ENCODE measurements at regions of chr18 and their contacts with region 1.

Region 1: DNA sequence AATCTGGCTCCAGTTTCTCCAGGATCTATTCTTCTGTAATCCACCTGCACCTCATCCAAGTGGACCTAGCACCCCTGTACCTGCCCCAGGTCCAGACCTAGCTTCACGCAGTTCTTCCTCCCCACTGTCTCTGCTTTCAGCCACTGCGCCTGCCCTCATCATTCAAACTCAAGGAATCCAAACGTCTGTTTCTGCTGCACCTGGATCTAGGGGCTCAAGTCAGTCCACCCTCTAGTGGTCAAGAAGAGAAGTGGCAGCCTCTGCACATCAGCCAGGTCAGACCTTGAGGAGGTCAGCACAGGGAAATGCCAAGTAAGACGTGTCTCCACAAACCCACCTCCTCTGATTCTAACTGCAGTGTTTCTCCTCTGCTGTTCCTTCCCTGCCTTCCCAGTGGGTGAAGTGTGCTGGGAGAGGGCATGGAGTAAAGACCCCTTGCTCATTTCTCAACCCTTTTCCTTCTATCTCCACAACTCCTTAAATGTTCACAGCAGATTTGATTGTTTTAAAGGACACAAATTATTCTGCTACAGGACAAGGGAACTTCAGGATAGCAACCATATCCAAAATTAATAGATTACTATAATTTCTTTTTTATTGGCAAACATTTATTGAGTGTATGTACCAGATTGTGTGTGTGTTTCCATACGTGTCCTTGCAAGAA is 8.6 kb upstream of the RNF152 start:
- DNase-seq: peak; percentile 73
- ATAC-seq: peak; percentile 94
- H3K4me3 ChIP-seq: no peak overlapping the region
- H3K27ac ChIP-seq: no peak overlapping the region
- H3K4me1 ChIP-seq: peaks cover 6% of the 10 kb centered on the region; the same call in 1 of the 2 replicates
- H3K27me3 ChIP-seq: peaks cover 17% of the 10 kb centered on the region
- CTCF ChIP-seq: peak; percentile 89

Region 2: GRCh38 chr18:61551586-61551985 is 349.9 kb before region 1 on chr18:
- CTCF ChIA-PET with region 1: no interaction called
- POLR2A ChIA-PET with region 1: no interaction called
- intact Hi-C with region 1: loop called (anchors 5 kb)
- DNase-seq: peak; percentile 82
- ATAC-seq: peak; percentile 74
- H3K4me3 ChIP-seq: no peak overlapping the region
- H3K27ac ChIP-seq: no peak overlapping the region
- H3K4me1 ChIP-seq: no peaks in the 10 kb centered on the region
- H3K27me3 ChIP-seq: no peaks in the 10 kb centered on the region
- CTCF ChIP-seq: peak; percentile 79

Region 3: DNA sequence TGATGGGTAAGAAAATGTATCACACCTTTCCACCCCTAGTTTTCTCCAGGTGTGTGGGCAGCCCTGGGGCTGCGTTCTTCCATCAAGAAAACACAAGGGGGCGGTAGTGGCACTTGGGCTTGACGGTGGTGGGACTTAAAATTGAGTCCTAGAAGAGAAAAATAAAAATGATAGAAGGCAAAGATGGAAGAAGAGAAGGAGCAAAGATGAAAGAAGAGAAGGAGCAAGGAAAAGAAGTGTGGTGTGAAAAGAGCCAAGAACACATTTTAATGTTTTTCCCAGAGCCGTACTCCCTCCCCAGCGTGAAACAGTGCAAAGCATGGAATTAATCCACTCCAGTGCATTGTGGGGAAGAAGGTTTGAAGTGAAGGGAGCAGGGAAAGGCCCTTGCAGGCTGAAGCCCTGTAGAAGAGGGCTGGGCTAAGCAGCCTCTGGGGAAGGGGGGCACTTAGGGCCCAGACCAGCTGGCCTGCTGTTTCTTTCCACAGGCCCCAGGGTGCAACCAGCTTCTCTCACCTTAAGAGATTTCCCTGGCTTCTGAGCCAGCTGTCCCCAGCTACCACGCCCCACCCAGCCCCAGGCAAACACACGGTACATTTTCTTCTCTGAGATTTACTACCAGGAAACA is 265.4 kb before region 1 on chr18:
- CTCF ChIA-PET with region 1: no interaction called
- POLR2A ChIA-PET with region 1: no interaction called
- intact Hi-C with region 1: loop called (anchors 2 kb)
- DNase-seq: peak; percentile 61
- ATAC-seq: no peak; the same call in 1 of the 2 replicates
- H3K4me3 ChIP-seq: no peak overlapping the region
- H3K27ac ChIP-seq: no peak overlapping the region
- H3K4me1 ChIP-seq: no peaks in the 10 kb centered on the region
- H3K27me3 ChIP-seq: no peaks in the 10 kb centered on the region
- CTCF ChIP-seq: peak; percentile 87

Region 4: GRCh38 chr18:61955644-61956043 is 54.2 kb after region 1 on chr18:
- CTCF ChIA-PET with region 1: no interaction called
- POLR2A ChIA-PET with region 1: no interaction called
- intact Hi-C with region 1: no loop called
- DNase-seq: no peak
- ATAC-seq: no peak
- H3K4me3 ChIP-seq: no peak overlapping the region
- H3K27ac ChIP-seq: no peak overlapping the region
- H3K4me1 ChIP-seq: no peaks in the 10 kb centered on the region
- H3K27me3 ChIP-seq: no peaks in the 10 kb centered on the region
- CTCF ChIP-seq: no peak